ENCODE measurements at regions of chr10 and their contacts with region 1.

Region 1: DNA sequence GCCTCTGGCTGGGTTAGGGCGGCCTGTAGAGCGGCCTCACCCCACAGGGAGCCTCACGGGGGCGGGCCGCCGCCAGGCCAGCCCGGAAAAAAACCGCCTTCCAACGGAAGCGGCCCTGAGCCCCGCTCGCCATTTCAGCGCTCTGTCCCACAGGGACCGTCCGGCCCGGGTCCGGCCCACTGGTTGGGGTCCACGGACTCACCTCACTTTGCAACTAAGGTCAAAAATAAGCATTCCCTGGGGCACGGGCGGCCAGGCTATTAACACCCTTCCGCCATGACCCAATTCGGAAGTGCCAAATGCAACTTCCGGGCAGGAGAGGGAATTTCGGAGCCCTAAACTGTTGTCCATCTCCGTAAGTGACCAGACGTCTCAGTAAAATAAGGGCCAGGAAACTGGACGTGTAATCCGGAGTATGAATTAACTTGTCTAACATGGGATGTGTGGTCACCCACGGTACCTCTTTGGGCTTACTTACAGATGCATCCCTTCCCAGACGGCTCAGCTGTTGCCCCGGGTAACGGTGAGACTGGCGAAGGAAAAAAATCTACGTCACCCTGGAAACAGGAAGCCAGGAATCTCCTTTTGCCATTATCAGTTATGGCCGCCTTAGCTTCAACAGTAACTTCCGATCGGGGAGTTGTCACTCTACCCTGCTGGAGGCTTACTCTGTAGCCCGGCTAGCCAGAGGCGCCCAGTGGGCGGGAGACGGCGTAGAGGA is at the start of gene BBIP1:
- DNase-seq: peak; percentile 99
- ATAC-seq: peak; percentile 85
- H3K4me3 ChIP-seq: peak within 1 kb of the TSS; percentile 78 to 100 (median 97)
- H3K4me3 Mint-ChIP-seq: peak within 1 kb of the TSS; percentile 98
- H3K27ac ChIP-seq: peak within 1 kb of the TSS; percentile 95 to 99
- H3K27ac Mint-ChIP-seq: peak within 1 kb of the TSS; percentile 100
- H3K4me1 ChIP-seq: peaks cover 16 to 33% of the 10 kb centered on the region in 2 donors
- H3K4me1 Mint-ChIP-seq: peaks cover 49% of the 10 kb centered on the region
- H3K27me3 ChIP-seq: no peaks in the 10 kb centered on the region
- H3K27me3 Mint-ChIP-seq: no peaks in the 10 kb centered on the region
- CTCF ChIP-seq: no peak
- total RNA-seq, gene BBIP1: 35.1 and 46.1 TPM in 2 replicates

Region 2: GRCh38 chr10:110843031-110843430 is 75.8 kb before region 1 on chr10:
- CTCF ChIA-PET with region 1: interaction called, 3 read pairs
- POLR2A ChIA-PET with region 1: interaction called, 8 read pairs
- intact Hi-C with region 1: loop called (anchors 1 kb)
- DNase-seq: peak; percentile 95
- ATAC-seq: peak; percentile 67
- H3K4me3 ChIP-seq: peak overlapping the region in 4 of 5 experiments; percentile 1 to 50 (median 26)
- H3K4me3 Mint-ChIP-seq: peak overlapping the region; percentile 69
- H3K27ac ChIP-seq: peak overlapping the region; percentile 94 to 99
- H3K27ac Mint-ChIP-seq: peak overlapping the region; percentile 89
- H3K4me1 ChIP-seq: peaks cover 66 to 76% of the 10 kb centered on the region in 2 donors
- H3K4me1 Mint-ChIP-seq: peaks cover 72% of the 10 kb centered on the region
- H3K27me3 ChIP-seq: no peaks in the 10 kb centered on the region
- H3K27me3 Mint-ChIP-seq: no peaks in the 10 kb centered on the region
- CTCF ChIP-seq: no peak

Region 3: DNA sequence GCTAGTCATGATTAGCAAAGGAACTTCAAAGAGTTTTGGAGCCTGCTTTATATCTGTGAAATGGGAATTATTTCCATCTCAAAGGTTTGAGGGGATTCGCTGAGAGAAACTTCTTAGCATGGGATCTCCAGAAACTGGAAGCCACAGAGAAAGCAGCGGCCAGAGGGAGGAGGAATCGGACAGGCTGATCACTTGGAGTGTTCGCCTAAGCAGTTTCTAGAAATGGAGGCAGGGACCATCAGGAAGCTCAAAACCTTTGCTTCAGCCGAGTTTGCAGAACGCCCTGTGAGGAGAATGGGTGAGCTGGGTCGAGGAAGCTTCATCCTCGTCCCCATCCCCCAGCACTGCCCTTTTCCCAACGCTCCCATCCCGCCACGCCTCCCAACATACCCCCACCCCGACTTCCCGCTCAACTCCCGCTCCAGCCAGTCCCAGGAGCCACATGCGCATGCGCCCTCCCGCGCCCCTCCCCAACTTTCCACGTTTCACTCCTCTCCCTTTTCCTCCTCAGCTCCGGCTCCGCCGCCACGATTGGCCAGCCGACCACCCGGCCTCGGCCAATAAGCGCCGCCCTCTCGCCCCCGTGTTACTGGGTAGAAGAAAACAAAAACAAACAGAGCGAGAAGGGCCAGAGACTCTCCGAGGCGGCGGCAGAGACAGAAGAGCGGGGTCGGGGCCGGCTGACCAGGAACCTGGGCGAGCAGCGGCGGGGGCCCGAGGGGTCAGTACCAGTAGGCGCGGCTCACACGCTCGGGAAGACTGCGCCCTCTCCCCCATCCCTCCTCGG is 47.3 kb before region 1 on chr10 and contains the start of gene PDCD4:
- CTCF ChIA-PET with region 1: interaction called, 4 read pairs
- POLR2A ChIA-PET with region 1: interaction called, 7 read pairs
- intact Hi-C with region 1: loop called (anchors 2 kb)
- DNase-seq: peak; percentile 92
- ATAC-seq: peak; percentile 74
- H3K4me3 ChIP-seq: peak within 1 kb of the TSS; percentile 82 to 94 (median 85)
- H3K4me3 Mint-ChIP-seq: peak within 1 kb of the TSS; percentile 91
- H3K27ac ChIP-seq: peak within 1 kb of the TSS; percentile 89 to 94
- H3K27ac Mint-ChIP-seq: peak within 1 kb of the TSS; percentile 96
- H3K4me1 ChIP-seq: peaks cover 61% of the 10 kb centered on the region in 2 donors
- H3K4me1 Mint-ChIP-seq: peaks cover 60% of the 10 kb centered on the region
- H3K27me3 ChIP-seq: no peaks in the 10 kb centered on the region
- H3K27me3 Mint-ChIP-seq: no peaks in the 10 kb centered on the region
- CTCF ChIP-seq: no peak
- total RNA-seq, gene PDCD4: 169 and 185 TPM in 2 replicates

Region 4: GRCh38 chr10:110973400-110973799 is 54.6 kb after region 1 on chr10:
- CTCF ChIA-PET with region 1: no interaction called
- POLR2A ChIA-PET with region 1: no interaction called
- intact Hi-C with region 1: loop called (anchors 5 kb)
- DNase-seq: no peak
- ATAC-seq: no peak
- H3K4me3 ChIP-seq: no peak overlapping the region
- H3K4me3 Mint-ChIP-seq: peak overlapping the region; percentile 33
- H3K27ac ChIP-seq: peak overlapping the region in 1 of 2 donors; percentile 13
- H3K27ac Mint-ChIP-seq: no peak overlapping the region
- H3K4me1 ChIP-seq: peaks cover 4 to 16% of the 10 kb centered on the region in 2 donors
- H3K4me1 Mint-ChIP-seq: peaks cover 65% of the 10 kb centered on the region
- H3K27me3 ChIP-seq: no peaks in the 10 kb centered on the region
- H3K27me3 Mint-ChIP-seq: no peaks in the 10 kb centered on the region
- CTCF ChIP-seq: no peak

Region 5: GRCh38 chr10:111004016-111004415 is 85.2 kb after region 1 on chr10:
- CTCF ChIA-PET with region 1: no interaction called
- POLR2A ChIA-PET with region 1: no interaction called
- intact Hi-C with region 1: loop called (anchors 5 kb)
- DNase-seq: no peak
- ATAC-seq: no peak
- H3K4me3 ChIP-seq: no peak overlapping the region
- H3K4me3 Mint-ChIP-seq: no peak overlapping the region
- H3K27ac ChIP-seq: no peak overlapping the region
- H3K27ac Mint-ChIP-seq: no peak overlapping the region
- H3K4me1 ChIP-seq: no peaks in the 10 kb centered on the region
- H3K4me1 Mint-ChIP-seq: peaks cover 1% of the 10 kb centered on the region
- H3K27me3 ChIP-seq: no peaks in the 10 kb centered on the region
- H3K27me3 Mint-ChIP-seq: no peaks in the 10 kb centered on the region
- CTCF ChIP-seq: no peak

Region 6: DNA sequence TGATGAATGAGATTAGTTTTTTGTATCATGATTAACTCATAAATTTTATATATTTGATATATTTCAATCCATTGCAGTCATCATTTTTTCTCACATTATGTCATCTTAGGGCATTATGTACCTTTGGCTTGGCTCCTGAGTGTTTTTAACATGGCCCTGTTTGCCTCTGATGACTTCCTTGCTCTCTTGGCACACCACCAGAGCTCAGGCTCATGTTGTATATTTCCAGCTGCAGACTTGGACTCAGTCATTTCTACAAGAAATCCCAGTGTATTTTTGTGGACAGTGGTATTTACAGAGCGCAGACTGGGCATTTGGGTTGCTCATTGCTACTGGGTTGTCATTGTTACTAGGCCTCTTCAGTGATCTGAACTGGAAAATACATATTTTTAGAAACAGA is 346.5 kb after region 1 on chr10:
- CTCF ChIA-PET with region 1: no interaction called
- POLR2A ChIA-PET with region 1: no interaction called
- intact Hi-C with region 1: no loop called
- DNase-seq: no peak
- ATAC-seq: no peak
- H3K4me3 ChIP-seq: no peak overlapping the region
- H3K4me3 Mint-ChIP-seq: no peak overlapping the region
- H3K27ac ChIP-seq: no peak overlapping the region
- H3K27ac Mint-ChIP-seq: no peak overlapping the region
- H3K4me1 ChIP-seq: no peaks in the 10 kb centered on the region
- H3K4me1 Mint-ChIP-seq: no peaks in the 10 kb centered on the region
- H3K27me3 ChIP-seq: peaks cover 0 to 9% (median 3%) of the 10 kb centered on the region in 4 experiments
- H3K27me3 Mint-ChIP-seq: peaks cover 19% of the 10 kb centered on the region
- CTCF ChIP-seq: no peak